ENCODE measurements at regions of chr16 and their contacts with region 1.

Region 1: DNA sequence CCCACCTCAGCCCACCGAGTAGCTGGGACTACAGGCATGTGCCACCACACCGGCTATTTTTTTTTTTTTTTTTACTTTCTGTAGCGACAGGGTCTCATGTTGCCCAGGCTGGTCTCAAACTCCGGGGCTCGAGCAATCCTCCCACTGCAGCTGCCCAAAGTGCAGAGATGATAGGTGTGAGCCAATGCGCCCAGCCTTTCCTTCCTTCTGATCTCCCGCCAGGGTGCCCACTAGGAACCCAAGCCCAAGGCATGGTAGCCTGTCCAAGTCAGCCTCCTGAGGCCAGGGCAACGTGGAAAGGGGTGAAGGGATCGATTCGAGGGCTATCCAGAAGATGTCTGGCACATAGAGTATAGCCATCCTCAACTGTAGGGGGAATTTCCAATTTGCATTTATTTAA is 9.6 kb upstream of the CREBBP start:
- DNase-seq: no peak
- H3K4me3 ChIP-seq: no peak overlapping the region
- H3K27ac ChIP-seq: no peak overlapping the region
- H3K4me1 ChIP-seq: no peaks in the 10 kb centered on the region
- H3K27me3 ChIP-seq: no peaks in the 10 kb centered on the region
- CTCF ChIP-seq: no peak
- POLR2A ChIP-seq: no peak

Region 2: GRCh38 chr16:3950343-3951193 is 60.5 kb after region 1 on chr16:
- CTCF ChIA-PET with region 1: no interaction called
- POLR2A ChIA-PET with region 1: no interaction called
- dilution Hi-C with region 1: no loop called
- intact Hi-C with region 1: loop called (anchors 2 kb)
- DNase-seq: peak; percentile 79
- H3K4me3 ChIP-seq: no peak overlapping the region
- H3K27ac ChIP-seq: peak overlapping the region; percentile 26
- H3K4me1 ChIP-seq: peaks cover 19% of the 10 kb centered on the region
- H3K27me3 ChIP-seq: peaks cover 14 to 18% of the 10 kb centered on the region in 2 experiments
- CTCF ChIP-seq: no peak
- POLR2A ChIP-seq: no peak